ENCODE measurements at regions of chr22 and their contacts with region 1.

Region 1: DNA sequence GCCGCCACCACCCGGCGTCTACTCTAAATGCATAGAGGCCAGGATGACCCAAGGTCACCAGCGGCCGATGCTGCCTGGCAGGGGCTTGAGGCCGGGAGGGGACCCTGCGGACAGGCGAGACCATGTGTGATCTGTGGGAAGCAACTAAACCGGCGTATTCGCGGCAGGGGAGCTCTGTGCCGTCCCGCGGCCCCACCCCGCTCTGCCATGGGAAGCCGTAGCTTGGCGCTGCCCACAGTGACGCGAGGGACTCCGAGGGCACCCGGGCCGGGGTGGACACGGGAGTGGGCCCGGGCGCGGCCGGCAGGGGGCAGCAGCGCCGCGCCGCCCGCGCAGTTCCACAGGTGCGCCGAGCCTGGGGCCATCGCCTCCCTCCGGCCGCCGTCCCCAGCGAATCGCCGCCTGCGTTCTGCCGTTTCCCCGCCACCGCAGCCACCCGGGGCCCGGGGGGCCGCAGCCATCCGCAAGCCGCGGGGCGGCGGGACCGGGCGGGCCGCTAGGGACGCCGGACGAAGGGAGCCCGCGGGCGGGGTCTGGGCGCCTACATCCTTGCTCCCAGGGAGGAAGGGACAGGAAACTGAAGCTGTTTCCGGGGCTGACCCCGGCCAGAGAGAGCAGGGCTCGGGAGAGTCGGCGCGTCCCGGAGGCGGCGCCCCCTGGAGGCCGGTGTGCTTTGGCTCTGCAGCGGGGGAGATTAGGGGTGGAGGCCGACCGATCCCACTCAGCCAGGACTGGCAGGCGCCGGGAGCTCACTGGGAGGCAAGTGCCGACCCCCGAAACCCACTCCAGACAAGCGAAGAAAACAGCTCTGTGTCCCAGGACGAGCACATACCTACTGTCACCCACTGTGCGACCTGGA is 12.5 kb upstream of the HDHD5 start:
- DNase-seq: peak; percentile 92 to 97 (median 95)
- ATAC-seq: peak; percentile 78 to 95 (median 92)
- H3K4me3 ChIP-seq: peak overlapping the region; percentile 55 to 78 (median 70)
- H3K27ac ChIP-seq: peak overlapping the region; percentile 92 to 100 (median 98)
- H3K4me1 ChIP-seq: peaks cover 0 to 34% (median 15%) of the 10 kb centered on the region in 12 donors
- H3K27me3 ChIP-seq: no peaks in the 10 kb centered on the region
- CTCF ChIP-seq: peak; percentile 67 to 91 (median 78)
- POLR2A ChIP-seq: peak in 1 of 2 donors; percentile 51

Region 2: DNA sequence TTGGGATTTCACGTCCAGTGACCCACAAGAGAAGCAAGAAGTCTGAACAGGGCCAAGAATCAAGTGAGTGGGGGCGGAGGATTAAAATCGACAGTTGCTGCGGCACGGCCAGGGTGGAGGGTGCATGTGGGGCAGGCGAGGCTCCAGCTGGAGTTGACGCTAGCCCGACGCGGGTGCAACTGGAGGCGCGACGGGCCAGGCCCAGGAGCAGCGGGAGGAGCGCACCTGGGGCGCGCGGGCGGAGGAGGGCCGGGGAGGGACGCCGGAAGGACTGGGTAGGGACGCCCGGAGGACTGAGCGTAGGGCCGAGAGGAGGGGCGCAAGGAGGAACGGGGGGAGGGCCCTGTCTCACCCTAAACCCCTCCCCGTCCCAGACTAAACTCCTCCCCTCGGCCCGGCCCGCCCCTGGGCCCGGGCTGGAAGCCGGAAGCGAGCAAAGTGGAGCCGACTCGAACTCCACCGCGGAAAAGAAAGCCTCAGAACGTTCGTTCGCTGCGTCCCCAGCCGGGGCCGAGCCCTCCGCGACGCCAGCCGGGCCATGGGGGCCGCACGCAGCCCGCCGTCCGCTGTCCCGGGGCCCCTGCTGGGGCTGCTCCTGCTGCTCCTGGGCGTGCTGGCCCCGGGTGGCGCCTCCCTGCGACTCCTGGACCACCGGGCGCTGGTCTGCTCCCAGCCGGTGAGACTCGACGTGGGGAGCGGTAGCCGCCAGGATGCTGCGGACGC is 86.8 kb before region 1 on chr22 and contains the start of gene IL17RA:
- intact Hi-C with region 1: loop called in 4 of 10 experiments (anchors 5 kb)
- DNase-seq: peak; percentile 92 to 95 (median 93)
- ATAC-seq: peak; percentile 99 to 100 (median 99)
- H3K4me3 ChIP-seq: peak within 1 kb of the TSS; percentile 71 to 98 (median 90)
- H3K27ac ChIP-seq: peak within 1 kb of the TSS; percentile 67 to 98 (median 86)
- H3K4me1 ChIP-seq: peaks cover 0 to 49% (median 16%) of the 10 kb centered on the region in 12 donors
- H3K27me3 ChIP-seq: no peaks in the 10 kb centered on the region
- CTCF ChIP-seq: no peak
- POLR2A ChIP-seq: peak in 1 of 2 donors; percentile 87
- total RNA-seq, gene IL17RA: 5.8 to 23.1 (median 9.4) TPM

Region 3: GRCh38 chr22:17158568-17159503 is 12.7 kb before region 1 on chr22 and contains the start of gene HDHD5:
- intact Hi-C with region 1: loop called in 1 of 10 experiments (anchors 1 kb)
- DNase-seq: peak; percentile 92 to 96 (median 93)
- ATAC-seq: peak; percentile 84 to 95 (median 93)
- H3K4me3 ChIP-seq: peak within 1 kb of the TSS; percentile 69 to 94 (median 80)
- H3K27ac ChIP-seq: peak within 1 kb of the TSS; percentile 82 to 97 (median 92)
- H3K4me1 ChIP-seq: peaks cover 0 to 40% (median 25%) of the 10 kb centered on the region in 12 donors
- H3K27me3 ChIP-seq: no peaks in the 10 kb centered on the region
- CTCF ChIP-seq: peak in 2 of 12 donors; percentile 6 to 18
- POLR2A ChIP-seq: peak in 1 of 2 donors; percentile 49
- total RNA-seq, gene HDHD5: 35.7 to 60.3 (median 49.0) TPM

Region 4: GRCh38 chr22:17217179-17217578 is 45.6 kb after region 1 on chr22:
- intact Hi-C with region 1: no loop called
- DNase-seq: no peak
- ATAC-seq: no peak
- H3K4me3 ChIP-seq: peak overlapping the region in 1 of 12 donors; percentile 61
- H3K27ac ChIP-seq: peak overlapping the region in 1 of 12 donors; percentile 93
- H3K4me1 ChIP-seq: peaks cover 0 to 50% (median 0%) of the 10 kb centered on the region in 12 donors
- H3K27me3 ChIP-seq: peaks cover 0 to 5% (median 0%) of the 10 kb centered on the region in 9 donors
- CTCF ChIP-seq: no peak
- POLR2A ChIP-seq: no peak

Region 5: GRCh38 chr22:17368554-17369438 is 197.3 kb after region 1 on chr22:
- intact Hi-C with region 1: loop called in 4 of 10 experiments (anchors 5 to 10 kb)
- DNase-seq: peak; percentile 58 to 78 (median 67)
- ATAC-seq: peak; percentile 52 to 80 (median 74)
- H3K4me3 ChIP-seq: peak overlapping the region; percentile 41 to 81 (median 75)
- H3K27ac ChIP-seq: peak overlapping the region; percentile 51 to 90 (median 84)
- H3K4me1 ChIP-seq: peaks cover 0 to 26% (median 11%) of the 10 kb centered on the region in 12 donors
- H3K27me3 ChIP-seq: peaks cover 0 to 66% (median 3%) of the 10 kb centered on the region in 9 donors
- CTCF ChIP-seq: peak in 1 of 12 donors; percentile 7
- POLR2A ChIP-seq: peak in 1 of 2 donors; percentile 12

Region 6: DNA sequence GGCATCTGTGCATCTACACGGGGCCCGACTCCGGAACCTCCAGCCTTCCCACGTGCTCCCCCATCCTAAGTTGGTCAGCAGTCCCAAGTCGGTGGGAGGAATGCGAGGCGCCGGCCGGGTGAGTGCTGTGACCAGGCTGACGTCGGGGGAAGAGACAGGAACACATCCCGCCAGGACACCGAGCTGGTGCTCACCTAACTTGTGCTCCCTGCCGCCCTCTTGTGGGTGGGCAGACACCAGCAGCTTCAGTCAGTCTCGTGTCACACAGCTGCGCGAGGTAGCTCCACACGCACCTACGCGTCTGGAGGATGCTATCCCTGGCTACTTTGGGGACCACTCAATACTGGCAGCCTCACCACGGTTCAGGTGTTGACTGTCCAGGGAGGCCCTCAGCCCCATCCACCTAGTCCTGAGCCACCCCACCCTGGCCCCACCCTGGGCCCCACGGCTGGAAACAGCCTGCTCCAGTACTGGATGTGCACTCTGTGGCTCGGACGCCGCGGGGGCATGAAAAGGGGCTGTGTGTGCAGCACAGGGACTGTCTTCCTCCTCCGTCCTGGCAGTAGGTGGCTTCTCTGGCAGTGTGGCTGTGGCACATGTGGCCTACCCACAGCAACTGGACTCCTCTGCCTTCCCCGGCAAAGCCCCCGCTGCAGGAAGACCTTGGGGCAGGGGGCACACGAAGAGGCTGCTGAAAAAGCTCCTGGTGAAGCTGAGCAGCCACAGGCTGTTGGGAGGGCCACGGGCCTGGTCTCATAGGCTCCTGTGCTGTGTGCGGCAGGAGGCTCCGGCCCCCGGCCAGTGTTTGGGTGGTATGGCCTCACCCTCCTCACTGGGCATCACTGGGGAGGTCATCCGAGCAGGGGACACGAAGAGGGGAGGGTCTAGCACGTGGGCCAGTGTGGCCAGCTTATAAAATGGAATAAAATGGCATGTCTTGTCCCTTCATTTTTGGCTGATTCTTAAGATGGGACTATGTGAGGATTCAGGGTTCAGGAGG is 613.9 kb after region 1 on chr22:
- intact Hi-C with region 1: loop called in 1 of 10 experiments (anchors 10 kb)
- DNase-seq: peak in 4 of 5 donors; percentile 62 to 82 (median 70)
- ATAC-seq: peak in 3 of 4 donors; percentile 6 to 28 (median 18)
- H3K4me3 ChIP-seq: no peak overlapping the region
- H3K27ac ChIP-seq: peak overlapping the region; percentile 59 to 90 (median 84)
- H3K4me1 ChIP-seq: peaks cover 0 to 57% (median 29%) of the 10 kb centered on the region in 12 donors
- H3K27me3 ChIP-seq: no peaks in the 10 kb centered on the region
- CTCF ChIP-seq: peak; percentile 25 to 65 (median 48)
- POLR2A ChIP-seq: no peak

Measured in heart left ventricle (tissue), 16 donors.